RWPE1 (cell line): ENCODE measurements at regions of chr17 and their contacts with region 1.

Region 1: DNA sequence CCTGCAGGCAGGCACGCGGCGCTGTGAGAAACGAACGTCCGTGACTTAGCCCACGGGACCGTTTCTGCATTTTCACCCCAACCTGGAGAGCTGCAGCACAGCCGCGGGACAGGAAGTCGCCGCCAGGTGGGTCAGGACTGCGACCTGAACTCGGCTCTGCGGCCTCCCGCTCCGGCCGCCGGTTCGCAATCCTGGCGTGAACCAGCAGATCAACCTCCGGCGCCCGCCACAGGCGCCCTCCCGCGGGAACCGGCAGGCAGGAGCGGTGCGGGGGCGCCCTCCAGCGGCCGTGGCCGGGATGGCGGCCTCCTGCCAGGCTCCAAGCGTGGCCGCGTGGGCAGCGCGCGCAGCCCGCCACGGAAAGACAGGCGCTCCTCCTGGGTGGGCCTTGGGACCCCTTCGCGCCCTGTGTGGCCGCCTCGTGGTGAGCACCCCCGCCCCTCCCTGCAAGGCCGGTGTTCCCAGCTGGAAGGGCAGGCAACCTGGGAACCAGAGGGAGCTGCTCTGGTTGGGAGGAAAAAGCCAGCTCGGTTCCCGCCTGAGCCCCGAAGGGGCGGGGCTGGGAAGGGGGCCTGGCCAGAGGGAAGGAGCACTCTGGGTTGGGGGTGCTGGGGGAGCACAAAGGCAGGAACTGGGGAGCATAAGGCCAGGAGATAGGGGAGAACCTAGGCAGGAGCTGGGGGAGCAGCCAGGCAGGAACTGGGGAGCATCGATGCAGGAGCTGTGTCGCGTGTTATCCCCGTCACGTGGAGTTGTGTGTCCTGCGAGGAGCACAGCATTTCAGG is 28.2 kb downstream of the ACTG1 start:
- DNase-seq: peak; percentile 79
- H3K27ac ChIP-seq: peak overlapping the region; percentile 63
- CTCF ChIP-seq: peak; percentile 99

Region 2: DNA sequence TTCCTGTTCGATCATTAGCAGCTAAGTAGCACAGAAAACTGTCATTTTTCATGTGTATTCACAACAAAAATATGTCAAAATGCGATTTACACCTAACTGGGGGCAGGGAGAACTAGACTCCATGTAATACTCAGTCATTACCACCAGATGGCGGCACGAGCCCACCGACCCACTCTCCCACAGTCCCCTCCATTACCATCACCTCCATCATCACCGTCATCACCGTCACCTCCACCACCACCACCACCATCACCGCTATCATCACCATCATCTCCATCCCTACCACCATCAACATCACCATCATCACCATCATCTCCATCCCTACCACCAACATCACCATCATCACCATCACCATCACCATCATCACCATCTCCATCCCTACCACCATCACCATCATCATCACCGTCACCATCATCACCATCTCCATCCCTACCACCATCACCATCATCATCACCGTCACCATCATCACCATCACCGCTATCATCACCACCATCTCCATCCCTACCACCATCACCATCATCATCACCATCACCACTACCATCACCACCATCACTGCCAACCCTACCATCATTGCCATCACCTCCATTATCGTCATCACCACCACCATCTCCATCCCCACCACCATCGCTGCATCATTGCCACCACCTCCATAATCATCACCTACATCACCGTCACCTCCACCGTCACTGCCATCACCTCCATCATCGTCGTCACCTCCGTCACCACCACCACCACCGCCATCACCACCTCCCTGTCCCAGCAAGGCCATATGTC is 230.8 kb before region 1 on chr17:
- CTCF ChIA-PET with region 1: interaction called, 20 read pairs
- POLR2A ChIA-PET with region 1: no interaction called
- DNase-seq: peak; percentile 47
- H3K27ac ChIP-seq: peak overlapping the region; percentile 91
- CTCF ChIP-seq: peak; percentile 88

Region 3: GRCh38 chr17:81294856-81295680 is 189.3 kb before region 1 on chr17 and contains the start of gene SLC38A10:
- CTCF ChIA-PET with region 1: no interaction called
- POLR2A ChIA-PET with region 1: no interaction called
- DNase-seq: peak; percentile 97
- H3K27ac ChIP-seq: peak within 1 kb of the TSS; percentile 90
- CTCF ChIP-seq: no peak

Region 4: DNA sequence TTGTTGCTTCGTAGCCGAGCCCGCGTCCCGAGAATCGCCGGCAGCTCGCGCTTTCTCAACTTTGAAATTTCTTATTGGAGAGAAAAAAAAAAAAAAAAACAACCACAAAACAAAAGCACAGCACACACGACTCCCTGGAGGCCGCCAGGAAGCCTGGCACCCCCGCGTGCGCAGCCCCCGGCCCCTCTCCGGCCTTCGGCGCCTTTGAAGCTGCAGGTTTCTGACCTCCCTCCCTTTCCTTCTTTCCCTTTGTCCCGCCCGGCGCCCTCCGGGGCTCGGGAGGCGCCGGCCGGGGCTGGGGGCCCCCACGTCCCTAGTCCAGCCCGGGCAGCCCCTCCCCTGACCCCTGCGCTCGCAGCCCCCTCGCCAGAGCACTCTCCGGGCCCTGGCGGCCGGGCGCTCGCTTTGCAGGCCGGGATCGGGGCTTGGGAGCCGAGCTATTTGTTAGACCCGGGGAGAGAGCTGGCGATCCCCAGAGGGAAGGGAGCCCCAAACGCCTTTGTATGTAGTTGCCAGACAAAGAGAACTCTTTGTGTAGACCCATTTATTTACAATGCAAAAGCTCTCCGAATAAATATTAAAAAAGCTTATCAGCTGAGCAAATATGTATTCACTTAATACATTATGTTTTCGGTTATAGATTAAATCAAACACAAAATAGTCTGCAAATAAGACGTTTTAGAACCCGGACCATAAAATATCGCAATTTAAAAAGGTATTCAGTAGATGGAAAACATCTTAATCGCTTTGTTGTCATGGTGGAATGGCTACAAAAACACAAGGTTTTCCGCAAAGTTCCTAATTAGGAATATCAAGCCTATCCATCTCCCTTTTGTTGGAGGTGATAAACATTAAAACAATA is 86.8 kb before region 1 on chr17:
- CTCF ChIA-PET with region 1: interaction called, 12 read pairs
- POLR2A ChIA-PET with region 1: interaction called, 3 read pairs
- DNase-seq: no peak
- H3K27ac ChIP-seq: peak overlapping the region; percentile 94
- CTCF ChIP-seq: peak; percentile 32; the same call in 1 of the 2 replicates

Region 5: GRCh38 chr17:81460856-81461460 is 23.4 kb before region 1 on chr17:
- CTCF ChIA-PET with region 1: interaction called, 12 read pairs
- POLR2A ChIA-PET with region 1: no interaction called
- DNase-seq: no peak
- H3K27ac ChIP-seq: no peak overlapping the region; the same call in 1 of the 2 replicates
- CTCF ChIP-seq: no peak